Breast epithelium (tissue), 4 donors: ENCODE measurements at regions of chr20 and their contacts with region 1.

Region 1: DNA sequence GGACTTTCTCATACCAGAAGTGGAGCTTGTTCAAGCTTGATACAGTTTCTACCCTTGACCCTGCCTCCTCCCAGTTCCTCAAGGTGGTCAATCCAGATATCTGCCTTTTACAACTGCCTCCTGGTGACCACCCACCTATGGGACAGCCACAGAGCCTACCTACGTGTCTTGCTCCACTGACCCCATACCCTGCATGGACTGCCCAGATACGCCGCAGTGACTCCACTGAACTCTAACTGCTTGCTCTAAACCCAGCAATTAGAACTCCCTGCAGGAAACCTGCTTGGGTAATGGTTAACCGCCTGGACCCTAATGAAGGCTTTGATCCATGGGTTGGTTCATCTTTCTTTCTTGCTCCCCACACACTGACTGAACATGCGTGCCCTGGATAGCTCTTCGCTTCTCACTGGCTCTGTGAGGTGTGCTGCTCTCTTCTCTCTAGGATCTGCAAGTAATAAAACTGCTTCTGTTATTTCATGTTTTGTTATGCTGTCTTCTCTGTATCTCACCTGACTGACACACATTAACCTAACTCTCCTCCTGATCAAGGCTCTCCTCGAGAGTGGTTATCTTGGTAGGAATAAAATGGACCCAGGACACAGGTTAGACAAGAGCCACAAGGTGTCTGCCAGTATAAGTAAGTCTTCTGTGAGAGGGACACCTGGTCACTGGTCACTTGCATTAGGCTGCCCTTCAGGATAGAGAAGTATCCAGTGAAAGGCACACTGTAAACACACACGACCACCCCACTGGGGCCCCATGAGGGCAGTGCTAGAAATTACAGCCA is 79.2 kb downstream of the CHD6 start:
- DNase-seq: no peak
- H3K4me3 ChIP-seq: no peak overlapping the region
- H3K27ac ChIP-seq: no peak overlapping the region
- H3K4me1 ChIP-seq: no peaks in the 10 kb centered on the region
- H3K27me3 ChIP-seq: no peaks in the 10 kb centered on the region
- CTCF ChIP-seq: no peak
- POLR2A ChIP-seq: no peak

Region 2: GRCh38 chr20:41499961-41500725 is 38.9 kb before region 1 on chr20:
- intact Hi-C with region 1: no loop called
- DNase-seq: no peak
- H3K4me3 ChIP-seq: no peak overlapping the region
- H3K27ac ChIP-seq: no peak overlapping the region
- H3K4me1 ChIP-seq: no peaks in the 10 kb centered on the region
- H3K27me3 ChIP-seq: no peaks in the 10 kb centered on the region
- CTCF ChIP-seq: no peak
- POLR2A ChIP-seq: no peak

Region 3: GRCh38 chr20:41524980-41525613 is 13.9 kb before region 1 on chr20:
- intact Hi-C with region 1: loop called (anchors 2 kb)
- DNase-seq: peak; percentile 80 to 84
- H3K4me3 ChIP-seq: peak overlapping the region in 1 of 3 donors; percentile 26
- H3K27ac ChIP-seq: peak overlapping the region; percentile 52 to 56
- H3K4me1 ChIP-seq: peaks cover 0 to 3% of the 10 kb centered on the region in 2 donors
- H3K27me3 ChIP-seq: no peaks in the 10 kb centered on the region
- CTCF ChIP-seq: no peak
- POLR2A ChIP-seq: no peak